Calu3 (cell line): ENCODE measurements at regions of chr16 and their contacts with region 1.

Region 1: GRCh38 chr16:77675464-77676324 is 46.6 kb upstream of the NUDT7 start:
- DNase-seq: peak; percentile 75
- H3K4me3 Mint-ChIP-seq: no peak overlapping the region
- H3K27ac Mint-ChIP-seq: no peak overlapping the region
- H3K4me1 Mint-ChIP-seq: no peaks in the 10 kb centered on the region
- H3K27me3 Mint-ChIP-seq: no peaks in the 10 kb centered on the region
- CTCF ChIP-seq: peak; percentile 78

Region 2: DNA sequence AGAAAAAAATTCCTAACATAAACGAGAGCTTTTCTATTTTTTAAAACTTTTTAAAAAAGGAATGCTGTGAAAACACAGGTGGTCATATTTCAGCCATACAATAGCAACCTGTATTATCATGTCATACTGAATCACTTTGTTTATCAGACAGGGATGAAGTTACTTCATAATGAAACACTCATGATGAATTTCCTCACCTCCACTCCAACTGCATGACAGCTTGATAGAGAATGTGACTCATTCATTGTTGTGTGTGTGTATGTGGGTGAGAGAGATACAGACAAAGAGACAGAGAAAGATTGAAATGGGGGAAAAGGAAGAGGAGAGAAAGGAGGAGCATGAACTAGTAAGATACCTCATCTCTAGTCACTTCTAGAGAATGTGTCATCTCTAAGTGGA is 367.5 kb before region 1 on chr16:
- CTCF ChIA-PET with region 1: no interaction called
- intact Hi-C with region 1: no loop called
- DNase-seq: no peak
- H3K4me3 Mint-ChIP-seq: no peak overlapping the region
- H3K27ac Mint-ChIP-seq: peak overlapping the region; percentile 22
- H3K4me1 Mint-ChIP-seq: peaks cover 24% of the 10 kb centered on the region
- H3K27me3 Mint-ChIP-seq: no peaks in the 10 kb centered on the region
- CTCF ChIP-seq: no peak

Region 3: GRCh38 chr16:77700846-77701245 is 25.2 kb after region 1 on chr16:
- CTCF ChIA-PET with region 1: no interaction called
- intact Hi-C with region 1: no loop called
- DNase-seq: no peak
- H3K4me3 Mint-ChIP-seq: no peak overlapping the region
- H3K27ac Mint-ChIP-seq: no peak overlapping the region
- H3K4me1 Mint-ChIP-seq: no peaks in the 10 kb centered on the region
- H3K27me3 Mint-ChIP-seq: peaks cover 48% of the 10 kb centered on the region
- CTCF ChIP-seq: no peak

Region 4: DNA sequence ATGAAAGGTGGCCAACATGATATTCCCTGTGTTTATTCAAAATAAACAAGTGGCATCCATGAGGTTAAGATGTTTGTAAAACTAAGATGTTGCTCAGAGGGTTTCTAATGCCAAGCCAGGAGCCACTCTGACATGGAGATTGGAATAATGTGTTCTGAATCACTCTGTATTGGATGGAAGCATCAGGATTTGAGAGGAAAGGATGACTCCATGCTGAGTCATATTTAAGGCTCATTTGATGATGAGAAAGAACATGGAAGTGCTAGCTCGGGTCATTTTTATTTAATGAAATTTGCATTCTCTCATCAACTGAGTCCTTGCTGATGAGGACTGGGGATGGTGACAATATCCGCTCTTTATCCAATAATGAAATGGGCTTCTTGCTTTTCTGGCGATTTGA is 118.9 kb after region 1 on chr16:
- CTCF ChIA-PET with region 1: no interaction called
- intact Hi-C with region 1: no loop called
- DNase-seq: no peak
- H3K4me3 Mint-ChIP-seq: no peak overlapping the region
- H3K27ac Mint-ChIP-seq: no peak overlapping the region
- H3K4me1 Mint-ChIP-seq: no peaks in the 10 kb centered on the region
- H3K27me3 Mint-ChIP-seq: peaks cover 19% of the 10 kb centered on the region
- CTCF ChIP-seq: no peak

Region 5: GRCh38 chr16:77850636-77851333 is 175.1 kb after region 1 on chr16:
- CTCF ChIA-PET with region 1: no interaction called
- intact Hi-C with region 1: loop called (anchors 10 kb)
- DNase-seq: no peak
- H3K4me3 Mint-ChIP-seq: no peak overlapping the region
- H3K27ac Mint-ChIP-seq: no peak overlapping the region
- H3K4me1 Mint-ChIP-seq: no peaks in the 10 kb centered on the region
- H3K27me3 Mint-ChIP-seq: peaks cover 78% of the 10 kb centered on the region
- CTCF ChIP-seq: no peak

Region 6: DNA sequence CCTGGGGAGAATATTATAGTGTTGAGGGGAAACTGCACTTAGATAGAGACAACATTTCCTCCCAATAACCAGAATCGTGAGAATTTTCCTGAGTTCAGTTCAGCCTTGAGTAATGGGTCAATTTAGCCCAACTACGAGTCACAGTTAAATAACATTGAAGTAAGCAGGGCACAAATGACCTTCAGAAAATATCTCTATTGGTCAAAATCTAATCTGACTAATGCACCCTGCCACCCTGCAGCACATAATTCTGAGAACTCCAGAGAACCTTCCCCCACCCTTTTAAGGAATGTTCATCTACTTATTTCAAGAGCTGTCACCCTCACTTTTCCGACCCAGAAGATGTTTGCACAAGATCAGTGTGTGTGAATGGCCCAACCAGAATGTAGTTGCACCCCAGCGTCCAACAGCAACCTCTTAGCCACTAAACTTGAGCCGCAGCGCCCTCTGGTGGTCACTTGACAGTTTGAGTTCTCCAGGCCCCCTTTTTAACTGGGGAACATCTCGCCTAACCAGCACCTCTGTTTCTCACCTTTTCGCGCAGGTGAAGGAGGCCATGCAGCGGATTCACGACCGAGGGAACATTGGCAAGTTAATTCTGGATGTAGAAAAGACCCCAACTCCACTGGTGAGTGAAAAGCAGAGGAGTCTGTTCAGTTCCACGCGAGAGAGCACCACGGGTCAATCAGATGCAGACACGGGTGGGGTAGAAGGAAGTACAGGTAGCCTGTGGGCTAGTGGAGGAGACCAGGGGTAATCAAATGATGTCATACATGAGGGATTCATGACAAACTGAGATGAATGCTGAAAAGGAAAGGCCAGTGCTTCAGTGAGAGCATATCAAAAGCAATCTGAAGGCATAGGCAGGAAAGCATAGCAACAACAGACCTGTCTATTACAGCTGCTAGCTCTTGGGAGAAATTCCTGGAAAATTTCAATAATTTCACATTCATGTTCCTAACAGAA is 295.9 kb after region 1 on chr16:
- CTCF ChIA-PET with region 1: interaction called, 8 read pairs
- intact Hi-C with region 1: loop called (anchors 1 kb)
- DNase-seq: peak; percentile 81
- H3K4me3 Mint-ChIP-seq: no peak overlapping the region
- H3K27ac Mint-ChIP-seq: no peak overlapping the region
- H3K4me1 Mint-ChIP-seq: no peaks in the 10 kb centered on the region
- H3K27me3 Mint-ChIP-seq: peaks cover 43% of the 10 kb centered on the region
- CTCF ChIP-seq: peak; percentile 74

Region 7: DNA sequence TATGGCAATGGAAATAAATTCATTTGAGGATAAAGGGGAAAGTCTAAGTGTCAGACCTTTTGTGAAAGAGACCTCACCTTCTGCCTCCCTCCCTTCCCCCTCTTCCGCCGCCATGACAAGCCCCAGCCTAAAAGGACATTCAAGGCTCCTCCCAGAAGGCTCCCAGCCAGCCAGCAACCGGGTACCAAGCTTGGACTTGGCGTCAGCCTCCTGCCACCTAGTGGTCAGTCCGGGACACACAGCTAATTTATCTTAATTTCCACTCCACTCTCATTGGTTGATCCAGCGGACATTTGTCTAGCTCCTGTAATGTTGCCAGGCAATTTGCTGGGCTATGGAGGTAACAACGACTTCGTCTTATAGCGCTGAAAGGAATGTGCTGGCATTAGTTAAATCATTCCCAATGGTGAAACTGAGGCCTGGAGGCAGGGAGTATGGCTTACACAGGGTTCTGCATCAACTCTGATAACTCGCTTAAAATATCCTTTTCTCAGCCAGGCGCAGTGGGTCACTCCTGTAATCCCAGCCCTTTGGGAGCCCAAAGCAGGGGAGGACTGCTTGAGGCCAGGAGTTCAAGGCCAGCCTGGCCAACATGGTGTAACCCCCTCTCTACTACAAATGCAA is 327.3 kb after region 1 on chr16:
- CTCF ChIA-PET with region 1: interaction called, 4 read pairs
- intact Hi-C with region 1: loop called (anchors 1 kb)
- DNase-seq: peak; percentile 86
- H3K4me3 Mint-ChIP-seq: no peak overlapping the region
- H3K27ac Mint-ChIP-seq: no peak overlapping the region
- H3K4me1 Mint-ChIP-seq: no peaks in the 10 kb centered on the region
- H3K27me3 Mint-ChIP-seq: no peaks in the 10 kb centered on the region
- CTCF ChIP-seq: peak; percentile 81

Region 8: GRCh38 chr16:78092758-78093157 is 417.1 kb after region 1 on chr16:
- CTCF ChIA-PET with region 1: no interaction called
- intact Hi-C with region 1: loop called (anchors 1 kb)
- DNase-seq: no peak
- H3K4me3 Mint-ChIP-seq: no peak overlapping the region
- H3K27ac Mint-ChIP-seq: no peak overlapping the region
- H3K4me1 Mint-ChIP-seq: no peaks in the 10 kb centered on the region
- H3K27me3 Mint-ChIP-seq: peaks cover 43% of the 10 kb centered on the region
- CTCF ChIP-seq: no peak